Heart right ventricle (tissue), 16 donors: ENCODE measurements at regions of chr18 and their contacts with region 1.

Region 1: GRCh38 chr18:61443081-61443725 is 110.0 kb downstream of the CDH20 start:
- DNase-seq: no peak
- ATAC-seq: no peak
- H3K4me3 ChIP-seq: no peak overlapping the region
- H3K27ac ChIP-seq: no peak overlapping the region
- H3K4me1 ChIP-seq: no peaks in the 10 kb centered on the region
- H3K27me3 ChIP-seq: no peaks in the 10 kb centered on the region
- CTCF ChIP-seq: no peak

Region 2: DNA sequence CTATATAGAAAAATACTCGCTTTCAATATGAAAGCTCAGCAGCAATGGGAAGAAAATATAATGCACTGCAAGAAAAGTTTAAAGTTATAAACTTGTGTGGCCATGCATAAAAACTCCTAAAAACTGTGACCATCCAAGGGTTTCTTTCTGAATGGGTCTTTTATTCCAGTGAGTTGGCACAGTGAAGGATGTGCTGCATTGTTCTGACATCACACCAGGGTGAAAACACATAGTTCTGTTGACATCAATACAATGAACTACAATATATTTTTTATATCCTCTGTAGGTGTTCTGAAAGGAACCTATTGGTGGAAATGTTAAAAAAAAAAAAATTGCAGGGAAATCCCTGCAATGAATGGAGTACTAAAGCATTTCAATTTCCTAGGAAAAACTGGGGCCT is 29.8 kb before region 1 on chr18:
- intact Hi-C with region 1: loop called in 1 of 10 experiments (anchors 1 kb)
- DNase-seq: no peak
- ATAC-seq: no peak
- H3K4me3 ChIP-seq: no peak overlapping the region
- H3K27ac ChIP-seq: no peak overlapping the region
- H3K4me1 ChIP-seq: no peaks in the 10 kb centered on the region
- H3K27me3 ChIP-seq: no peaks in the 10 kb centered on the region
- CTCF ChIP-seq: no peak

Region 3: DNA sequence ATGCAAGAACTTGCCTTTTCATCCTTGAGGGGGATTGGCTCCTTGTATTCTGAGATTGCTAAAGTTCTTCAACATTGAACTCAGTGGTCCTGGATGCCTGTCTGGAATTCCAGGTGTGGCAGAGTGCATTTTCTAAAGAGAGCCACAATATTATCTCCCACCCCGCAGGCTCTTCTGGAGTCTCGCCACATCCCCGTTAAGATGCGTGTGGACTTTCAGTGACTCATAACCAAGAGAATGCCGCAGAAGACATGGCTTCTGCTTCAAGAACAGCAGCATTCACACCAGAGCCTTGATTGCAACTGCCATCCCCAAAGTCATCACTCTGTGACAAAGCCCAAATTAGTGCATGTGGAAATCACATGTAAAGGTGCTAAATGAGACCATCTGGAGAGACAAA is 32.7 kb after region 1 on chr18:
- intact Hi-C with region 1: no loop called
- DNase-seq: no peak
- ATAC-seq: no peak
- H3K4me3 ChIP-seq: no peak overlapping the region
- H3K27ac ChIP-seq: no peak overlapping the region
- H3K4me1 ChIP-seq: peaks cover 0 to 11% (median 0%) of the 10 kb centered on the region in 9 donors
- H3K27me3 ChIP-seq: peaks cover 0 to 4% (median 0%) of the 10 kb centered on the region in 7 donors
- CTCF ChIP-seq: no peak

Region 4: DNA sequence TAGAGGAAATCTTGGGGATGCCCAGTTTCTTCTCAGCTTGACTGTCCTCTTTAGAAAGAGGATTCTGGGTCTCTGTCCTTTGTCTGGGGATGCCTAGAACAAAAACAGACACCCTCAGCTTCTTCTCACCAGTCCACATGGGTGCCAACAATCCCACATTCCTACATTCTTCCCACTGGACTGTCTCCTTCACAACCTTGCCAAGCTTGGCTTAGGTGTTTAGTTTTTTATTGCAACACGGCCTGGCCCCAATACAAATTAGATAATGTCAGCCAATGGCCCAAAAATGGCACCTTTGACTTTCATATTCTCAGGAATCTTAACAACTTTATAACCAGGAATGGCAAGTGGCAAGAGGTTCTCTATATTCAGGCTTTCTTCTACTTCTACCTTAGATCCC is 176.6 kb after region 1 on chr18:
- intact Hi-C with region 1: no loop called
- DNase-seq: no peak
- ATAC-seq: no peak
- H3K4me3 ChIP-seq: no peak overlapping the region
- H3K27ac ChIP-seq: no peak overlapping the region
- H3K4me1 ChIP-seq: peaks cover 0 to 4% (median 0%) of the 10 kb centered on the region in 9 donors
- H3K27me3 ChIP-seq: no peaks in the 10 kb centered on the region
- CTCF ChIP-seq: no peak